Endothelial cell of umbilical vein (primary cell): ENCODE measurements at regions of chr1 and their contacts with region 1.

Region 1: DNA sequence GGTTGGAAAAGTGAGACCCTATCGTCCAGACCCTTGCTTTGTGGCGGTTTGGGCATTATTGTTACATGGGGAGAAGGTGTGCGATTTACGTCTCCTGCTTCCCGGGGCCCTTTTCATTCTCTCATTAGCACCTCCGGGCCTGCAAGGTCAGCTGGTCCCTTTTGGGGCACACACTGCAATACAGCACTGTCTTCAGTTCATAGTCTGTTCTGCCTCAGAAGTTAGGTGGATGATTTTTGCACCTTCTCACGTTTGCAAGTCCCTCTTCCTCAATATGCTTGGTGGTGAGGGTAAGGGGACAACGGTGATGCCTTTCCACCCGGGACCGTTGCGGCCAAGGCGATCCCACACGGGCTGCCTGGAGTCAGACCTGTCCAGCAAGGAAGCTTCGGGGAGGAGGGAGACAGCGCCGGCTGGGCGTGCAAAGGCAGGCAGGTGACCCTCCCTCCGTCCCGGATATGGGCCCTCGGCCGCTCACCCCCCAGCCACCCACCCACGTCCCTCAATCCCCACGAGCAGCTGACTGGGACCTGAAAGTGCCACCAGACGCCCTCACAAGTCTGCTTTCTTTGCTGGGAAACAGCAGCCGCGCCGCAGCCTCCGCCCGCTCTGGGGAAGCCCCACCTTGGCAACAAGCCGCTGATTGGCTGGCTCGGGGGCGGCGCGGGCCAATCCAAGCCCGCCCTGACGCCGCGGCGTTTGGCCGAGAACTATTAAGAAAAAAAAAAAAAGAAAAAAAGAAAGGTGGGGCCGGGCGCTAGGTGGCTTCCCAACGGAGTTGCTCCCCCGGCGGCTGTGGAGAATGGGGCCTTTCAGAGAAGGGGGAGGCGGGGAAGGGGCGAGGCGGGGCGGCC is 21.7 kb downstream of the BTG2 start:
- DNase-seq: peak; percentile 94
- H3K4me3 ChIP-seq: peak overlapping the region; percentile 19 to 52 (median 39)
- H3K27ac ChIP-seq: no peak overlapping the region
- H3K4me1 ChIP-seq: peaks cover 19% of the 10 kb centered on the region
- H3K27me3 ChIP-seq: peaks cover 8 to 23% of the 10 kb centered on the region in 2 experiments
- CTCF ChIP-seq: no peak
- POLR2A ChIP-seq: peak; percentile 8

Region 2: GRCh38 chr1:203290261-203291089 is 36.6 kb before region 1 on chr1:
- CTCF ChIA-PET with region 1: interaction called, 12 read pairs
- POLR2A ChIA-PET with region 1: interaction called, 9 read pairs
- dilution Hi-C with region 1: no loop called
- intact Hi-C with region 1: loop called (anchors 2 kb)
- DNase-seq: peak; percentile 84
- H3K4me3 ChIP-seq: no peak overlapping the region
- H3K27ac ChIP-seq: no peak overlapping the region
- H3K4me1 ChIP-seq: peaks cover 15% of the 10 kb centered on the region
- H3K27me3 ChIP-seq: no peaks in the 10 kb centered on the region
- CTCF ChIP-seq: no peak
- POLR2A ChIP-seq: no peak